ENCODE measurements at regions of chr3 and their contacts with region 1.

Region 1: DNA sequence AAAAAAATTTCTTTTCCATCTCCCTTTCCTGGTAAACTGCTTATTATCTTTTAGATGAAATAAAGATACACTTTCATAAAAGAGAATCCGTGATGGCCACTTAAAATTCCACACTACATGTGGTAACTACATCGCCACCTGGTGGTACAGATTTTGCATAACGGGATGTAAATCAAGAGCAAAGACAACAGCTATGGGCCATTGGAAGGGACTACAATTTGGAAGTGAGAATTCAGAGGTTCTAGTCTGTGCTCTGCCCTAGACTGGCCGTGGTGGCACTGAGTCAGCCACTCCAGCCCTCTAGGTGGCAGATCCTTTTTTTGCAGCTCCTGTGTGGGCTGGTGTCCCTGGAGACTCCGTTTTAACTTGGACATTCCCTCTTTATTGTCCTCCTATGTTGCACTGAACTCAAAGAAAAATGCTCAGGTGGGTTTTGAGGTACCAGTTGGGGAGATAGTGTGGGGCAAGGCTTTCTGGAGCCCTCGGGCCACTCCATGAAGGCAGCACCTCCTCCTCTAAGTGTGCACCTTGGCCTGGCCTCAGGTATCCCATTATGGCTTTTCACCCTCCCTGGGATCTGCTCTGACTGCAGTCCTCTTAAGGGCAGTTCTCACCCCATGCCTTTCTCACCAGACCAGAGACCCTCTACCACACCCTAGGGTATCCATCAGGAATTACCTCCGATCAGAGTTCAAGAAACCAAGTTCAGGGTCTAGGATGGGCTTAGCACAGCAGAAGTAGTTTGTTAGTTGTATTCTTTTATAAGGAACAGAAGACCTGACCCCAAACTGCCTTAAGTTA is 54.9 kb downstream of the SPSB4 start:
- DNase-seq: peak; percentile 65
- CTCF ChIP-seq: peak; percentile 82

Region 2: DNA sequence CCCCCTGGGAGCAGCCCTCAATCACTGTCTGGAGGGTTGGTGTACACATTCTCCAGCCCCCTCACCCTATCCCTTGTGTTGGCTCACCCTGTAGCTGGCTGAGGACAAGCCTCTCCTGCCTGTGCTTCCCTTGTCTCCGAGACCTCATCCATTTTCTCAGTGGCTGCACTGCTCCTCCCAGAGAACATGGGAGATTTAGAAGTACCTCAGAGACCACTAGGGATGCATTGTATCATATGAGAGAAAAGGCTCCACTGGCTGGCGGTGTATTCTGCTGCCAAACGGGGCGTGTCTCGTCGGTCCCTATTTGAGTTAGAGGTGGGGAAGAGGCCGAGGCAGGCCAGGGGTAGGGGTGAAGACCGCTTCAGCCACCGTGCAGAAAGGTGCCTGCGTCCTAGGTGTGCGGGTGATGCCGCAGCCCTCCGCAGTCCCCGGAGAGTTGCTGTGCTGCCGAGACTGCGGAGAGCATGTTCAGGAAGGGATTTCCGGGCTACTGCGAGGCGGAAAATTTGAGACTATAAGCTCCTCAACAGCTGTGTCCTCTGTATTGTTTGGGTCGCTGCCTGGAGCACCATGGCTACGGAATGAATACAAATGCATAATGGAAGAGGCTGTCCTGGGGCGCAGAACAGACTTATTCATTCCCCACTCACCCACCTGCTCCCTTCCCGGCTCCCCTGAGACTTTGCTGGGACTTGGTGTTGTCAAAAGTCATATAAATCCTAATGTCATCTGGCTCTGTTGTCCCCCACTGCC is 11.1 kb before region 1 on chr3:
- CTCF ChIA-PET with region 1: interaction called, 13 read pairs
- POLR2A ChIA-PET with region 1: no interaction called
- DNase-seq: no peak
- CTCF ChIP-seq: no peak